MCF 10A (cell line): ENCODE measurements at regions of chr7 and their contacts with region 1.

Region 1: GRCh38 chr7:76291343-76292212 is 10.9 kb upstream of the HSPB1 start:
- DNase-seq: peak; percentile 99
- H3K4me3 Mint-ChIP-seq: peak overlapping the region; percentile 29
- H3K27ac Mint-ChIP-seq: peak overlapping the region; percentile 84
- H3K4me1 Mint-ChIP-seq: peaks cover 41% of the 10 kb centered on the region
- H3K27me3 Mint-ChIP-seq: no peaks in the 10 kb centered on the region
- CTCF ChIP-seq: peak; percentile 89

Region 2: DNA sequence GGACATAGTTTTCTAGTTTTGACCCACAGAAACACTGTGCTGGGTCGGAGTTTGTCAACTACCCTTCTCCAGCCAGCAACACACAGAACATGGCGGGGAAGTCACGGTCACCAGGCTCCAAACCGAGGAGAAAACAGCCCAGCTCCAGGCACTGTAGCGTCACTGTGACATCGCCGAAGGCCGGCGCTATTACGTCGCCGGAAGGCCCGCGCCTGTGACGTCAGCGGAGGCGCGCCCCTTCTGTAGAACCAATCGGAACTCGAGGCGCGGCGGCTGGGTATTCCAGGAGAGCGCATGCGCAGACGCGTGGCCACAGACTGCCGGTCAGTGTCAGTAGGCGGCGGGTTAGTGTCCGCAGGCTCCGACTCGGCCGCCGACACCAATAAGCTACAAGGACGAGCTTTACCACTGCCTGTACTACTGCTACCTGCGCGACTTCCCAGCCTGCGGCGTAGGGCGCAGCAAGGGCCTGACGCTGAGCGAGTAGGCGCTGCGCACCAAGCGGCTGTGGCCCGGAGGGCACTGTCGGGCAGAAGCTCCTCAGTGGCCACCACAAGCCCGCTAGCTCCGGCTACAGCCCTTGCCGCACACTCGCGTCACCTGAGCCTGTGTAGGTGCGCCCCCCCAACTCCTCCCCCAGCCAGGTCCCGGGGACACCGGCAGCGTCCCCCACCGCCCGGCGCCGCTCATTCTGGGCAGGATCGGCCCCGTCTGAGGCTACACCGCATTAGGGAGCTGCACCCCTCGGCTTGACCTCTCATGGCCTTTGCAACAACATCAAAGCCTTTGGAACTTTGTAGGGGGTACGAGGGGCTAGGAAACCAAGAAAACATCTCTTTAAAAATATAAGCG is 124.9 kb before region 1 on chr7:
- CTCF ChIA-PET with region 1: interaction called, 3 read pairs
- POLR2A ChIA-PET with region 1: interaction called, 10 read pairs
- intact Hi-C with region 1: no loop called
- DNase-seq: peak; percentile 95
- H3K4me3 Mint-ChIP-seq: peak overlapping the region; percentile 74
- H3K27ac Mint-ChIP-seq: peak overlapping the region; percentile 94
- H3K4me1 Mint-ChIP-seq: no peaks in the 10 kb centered on the region
- H3K27me3 Mint-ChIP-seq: no peaks in the 10 kb centered on the region
- CTCF ChIP-seq: no peak

Region 3: DNA sequence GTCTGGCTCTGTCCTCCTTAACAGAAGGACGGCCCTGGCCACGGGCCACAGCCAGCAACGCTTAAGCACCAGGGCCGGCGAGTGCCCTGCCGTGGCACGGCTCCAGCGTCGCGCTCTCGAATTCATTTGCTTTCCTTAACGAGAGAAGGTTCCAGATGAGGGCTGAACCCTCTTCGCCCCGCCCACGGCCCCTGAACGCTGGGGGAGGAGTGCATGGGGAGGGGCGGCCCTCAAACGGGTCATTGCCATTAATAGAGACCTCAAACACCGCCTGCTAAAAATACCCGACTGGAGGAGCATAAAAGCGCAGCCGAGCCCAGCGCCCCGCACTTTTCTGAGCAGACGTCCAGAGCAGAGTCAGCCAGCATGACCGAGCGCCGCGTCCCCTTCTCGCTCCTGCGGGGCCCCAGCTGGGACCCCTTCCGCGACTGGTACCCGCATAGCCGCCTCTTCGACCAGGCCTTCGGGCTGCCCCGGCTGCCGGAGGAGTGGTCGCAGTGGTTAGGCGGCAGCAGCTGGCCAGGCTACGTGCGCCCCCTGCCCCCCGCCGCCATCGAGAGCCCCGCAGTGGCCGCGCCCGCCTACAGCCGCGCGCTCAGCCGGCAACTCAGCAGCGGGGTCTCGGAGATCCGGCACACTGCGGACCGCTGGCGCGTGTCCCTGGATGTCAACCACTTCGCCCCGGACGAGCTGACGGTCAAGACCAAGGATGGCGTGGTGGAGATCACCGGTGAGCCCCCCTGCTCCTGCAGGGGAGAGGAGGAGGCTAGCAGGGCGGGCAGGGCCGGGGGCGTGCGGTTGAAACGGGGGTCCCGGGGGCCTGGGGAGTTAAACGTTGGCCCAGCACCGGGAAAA is 11.0 kb after region 1 on chr7 and contains the start of gene HSPB1:
- CTCF ChIA-PET with region 1: interaction called, 53 read pairs
- POLR2A ChIA-PET with region 1: interaction called, 283 read pairs
- intact Hi-C with region 1: loop called (anchors 1 kb)
- DNase-seq: peak; percentile 95
- H3K4me3 Mint-ChIP-seq: peak within 1 kb of the TSS; percentile 85
- H3K27ac Mint-ChIP-seq: peak within 1 kb of the TSS; percentile 81
- H3K4me1 Mint-ChIP-seq: peaks cover 34% of the 10 kb centered on the region
- H3K27me3 Mint-ChIP-seq: no peaks in the 10 kb centered on the region
- CTCF ChIP-seq: no peak
- total RNA-seq, gene HSPB1: 158 and 198 TPM in 2 replicates

Region 4: DNA sequence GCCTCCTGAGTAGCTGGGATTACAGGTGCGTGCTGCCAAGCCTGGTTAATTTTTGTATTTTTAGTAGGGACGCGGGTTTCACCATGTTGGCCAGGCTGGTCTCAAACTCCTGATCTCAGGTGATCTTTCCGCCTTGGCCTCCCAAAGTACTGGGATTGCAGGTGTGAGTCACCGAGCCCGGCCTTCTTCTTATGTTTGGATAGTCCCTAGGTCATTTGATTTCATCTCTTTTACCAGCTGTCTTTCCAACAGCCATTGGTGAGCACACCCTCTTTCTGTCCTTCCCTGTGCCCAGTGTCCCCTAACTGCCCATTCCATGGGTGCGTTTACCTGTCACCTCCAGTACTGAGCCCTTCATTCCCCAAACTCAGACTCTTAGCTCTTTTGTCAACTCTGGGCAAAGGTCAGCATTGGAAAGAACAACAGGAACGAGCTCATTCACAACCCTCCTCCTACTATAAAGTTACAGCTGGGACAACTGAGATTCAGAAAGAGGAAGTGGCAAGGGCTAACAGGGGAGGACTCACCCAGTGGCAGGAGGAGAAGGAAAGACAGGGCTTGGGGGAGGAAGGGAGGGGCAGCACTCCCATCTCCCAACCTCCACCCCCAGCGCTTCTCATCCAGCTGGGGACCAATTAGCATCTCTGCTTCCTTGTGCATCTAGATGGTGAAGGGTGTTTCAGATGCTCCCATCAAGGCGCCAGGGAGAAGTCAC is 112.4 kb after region 1 on chr7:
- CTCF ChIA-PET with region 1: no interaction called
- POLR2A ChIA-PET with region 1: no interaction called
- intact Hi-C with region 1: no loop called
- DNase-seq: no peak
- H3K4me3 Mint-ChIP-seq: no peak overlapping the region
- H3K27ac Mint-ChIP-seq: no peak overlapping the region
- H3K4me1 Mint-ChIP-seq: peaks cover 5% of the 10 kb centered on the region
- H3K27me3 Mint-ChIP-seq: no peaks in the 10 kb centered on the region
- CTCF ChIP-seq: no peak

Region 5: GRCh38 chr7:76515999-76516443 is 224.4 kb after region 1 on chr7:
- CTCF ChIA-PET with region 1: no interaction called
- POLR2A ChIA-PET with region 1: no interaction called
- intact Hi-C with region 1: no loop called
- DNase-seq: peak; percentile 52
- H3K4me3 Mint-ChIP-seq: no peak overlapping the region
- H3K27ac Mint-ChIP-seq: no peak overlapping the region
- H3K4me1 Mint-ChIP-seq: peaks cover 15% of the 10 kb centered on the region
- H3K27me3 Mint-ChIP-seq: no peaks in the 10 kb centered on the region
- CTCF ChIP-seq: peak; percentile 93